ENCODE measurements at regions of chr6 and their contacts with region 1.

Region 1: GRCh38 chr6:26537846-26538571 is at the start of gene HMGN4:
- H3K4me3 ChIP-seq: peak within 1 kb of the TSS; percentile 76
- H3K27ac ChIP-seq: peak within 1 kb of the TSS; percentile 79
- H3K4me1 ChIP-seq: peaks cover 5% of the 10 kb centered on the region; the same call in 1 of the 2 replicates
- CTCF ChIP-seq: peak; percentile 65; the same call in 1 of the 2 replicates

Region 2: DNA sequence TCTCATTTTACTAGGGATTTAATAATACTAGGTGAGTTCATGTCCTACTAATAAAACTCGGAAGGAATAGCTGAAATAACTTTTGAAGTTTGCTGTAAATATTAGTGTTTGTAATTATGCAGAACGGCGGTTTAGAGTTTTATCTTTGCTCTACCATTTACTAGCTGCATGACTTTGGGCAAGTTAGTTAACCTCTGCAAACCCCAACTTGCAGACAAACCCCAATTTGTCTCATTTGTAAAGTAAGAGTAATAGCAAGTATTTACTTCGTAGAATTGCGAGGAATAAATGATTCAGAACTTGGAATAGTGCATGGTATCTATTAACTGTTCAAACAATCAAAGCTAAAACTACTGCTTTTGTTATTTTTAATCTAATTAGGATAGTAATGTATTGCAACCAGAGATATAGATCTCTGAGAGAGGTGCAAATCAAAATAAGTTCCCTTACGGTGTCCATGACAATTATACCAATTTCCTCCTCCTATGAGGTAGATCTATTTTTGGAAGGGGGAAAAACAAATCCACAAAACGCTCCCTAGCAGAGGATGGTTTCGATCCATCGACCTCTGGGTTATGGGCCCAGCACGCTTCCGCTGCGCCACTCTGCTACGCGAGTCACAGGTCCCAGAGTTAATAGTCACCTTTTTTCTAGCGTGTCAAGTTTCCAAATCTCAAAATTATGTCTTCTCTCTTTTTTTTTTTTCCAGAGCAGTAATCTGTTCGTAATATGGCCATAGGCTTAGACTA is 208.1 kb before region 1 on chr6:
- CTCF ChIA-PET with region 1: interaction called, 7 read pairs
- POLR2A ChIA-PET with region 1: interaction called, 11 read pairs
- H3K4me3 ChIP-seq: peak overlapping the region; percentile 73
- H3K27ac ChIP-seq: no peak overlapping the region
- H3K4me1 ChIP-seq: no peaks in the 10 kb centered on the region; the same call in 1 of the 2 replicates
- CTCF ChIP-seq: no peak

Region 3: DNA sequence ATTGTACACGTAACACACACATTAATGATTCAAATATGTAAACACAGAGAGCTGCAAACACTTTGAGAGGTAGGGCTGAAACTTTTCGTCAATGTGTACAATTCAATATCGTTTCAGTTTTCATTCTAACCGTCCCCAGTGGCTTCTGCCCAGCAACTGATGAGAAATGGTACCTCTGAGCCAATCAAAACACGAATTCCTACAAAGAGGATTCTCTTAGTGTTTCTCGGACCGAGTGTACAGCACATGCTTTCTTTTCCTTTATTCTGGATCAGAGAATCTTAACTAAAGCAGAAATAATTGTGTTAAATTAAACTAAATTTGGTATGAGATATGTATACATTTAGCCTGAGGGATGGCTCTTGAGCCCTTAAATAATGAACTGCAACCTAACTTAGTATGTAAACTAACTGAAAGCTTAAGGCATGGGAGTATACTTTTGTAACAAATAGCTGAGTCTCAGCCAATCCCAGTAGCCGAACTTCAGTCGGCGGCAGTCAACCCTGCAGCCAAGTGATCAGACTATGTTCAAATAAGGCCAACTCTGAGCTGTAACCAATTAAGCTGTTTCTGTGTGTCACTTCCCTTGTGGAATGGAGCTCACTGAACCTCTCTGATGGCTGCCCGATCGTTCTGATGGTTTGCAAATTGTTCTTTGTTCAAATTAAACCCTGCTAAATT is 64.1 kb before region 1 on chr6:
- CTCF ChIA-PET with region 1: no interaction called
- POLR2A ChIA-PET with region 1: interaction called, 14 read pairs
- H3K4me3 ChIP-seq: peak overlapping the region; percentile 45
- H3K27ac ChIP-seq: peak overlapping the region; percentile 76
- H3K4me1 ChIP-seq: peaks cover 8% of the 10 kb centered on the region
- CTCF ChIP-seq: no peak

Region 4: GRCh38 chr6:26520853-26521599 is 17.0 kb before region 1 on chr6:
- CTCF ChIA-PET with region 1: interaction called, 6 read pairs
- POLR2A ChIA-PET with region 1: interaction called, 13 read pairs
- H3K4me3 ChIP-seq: peak overlapping the region; percentile 62
- H3K27ac ChIP-seq: peak overlapping the region; percentile 98
- H3K4me1 ChIP-seq: 0 out of 2 replicates have a peak, but pooled peaks cover 2% of the 10 kb centered on the region
- CTCF ChIP-seq: no peak

Region 5: DNA sequence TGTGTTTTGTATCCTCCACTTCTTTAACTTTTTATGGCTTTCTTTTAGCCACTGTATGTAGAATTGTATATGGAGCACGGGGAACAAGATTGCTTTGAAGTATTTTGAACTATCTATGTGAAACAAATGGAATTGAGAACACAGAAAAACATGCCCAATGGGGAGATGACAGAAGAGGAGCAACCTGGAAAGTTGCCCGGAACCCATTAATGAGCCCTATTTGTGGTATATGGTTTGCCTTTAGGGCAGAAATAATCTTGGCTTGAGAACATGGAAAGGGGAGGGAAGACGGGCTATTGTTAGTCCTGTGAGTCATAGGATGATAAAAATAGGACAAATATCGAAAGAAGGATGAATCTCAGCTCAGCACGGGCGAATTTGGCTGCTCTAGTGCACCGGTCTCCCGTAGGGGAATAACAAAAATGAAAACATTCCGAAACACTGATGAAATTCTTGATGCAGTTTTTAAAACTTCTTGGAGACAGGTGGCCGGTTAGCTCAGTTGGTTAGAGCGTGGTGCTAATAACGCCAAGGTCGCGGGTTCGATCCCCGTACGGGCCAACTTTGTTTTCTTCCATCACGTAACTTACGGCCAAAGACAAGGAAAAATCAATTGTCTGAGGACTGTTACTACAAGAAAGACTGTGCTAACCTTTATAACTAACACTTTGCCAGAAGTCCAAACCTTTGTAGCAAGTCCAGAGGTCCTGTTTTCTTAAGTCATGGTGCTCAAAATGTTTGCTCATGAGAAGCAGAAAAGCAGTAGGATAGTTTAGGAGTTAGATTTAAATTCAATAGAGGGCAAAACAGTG is 15.8 kb after region 1 on chr6:
- CTCF ChIA-PET with region 1: interaction called, 5 read pairs
- POLR2A ChIA-PET with region 1: interaction called, 29 read pairs
- H3K4me3 ChIP-seq: peak overlapping the region; percentile 71
- H3K27ac ChIP-seq: peak overlapping the region; percentile 60
- H3K4me1 ChIP-seq: no peaks in the 10 kb centered on the region
- CTCF ChIP-seq: no peak

Region 6: GRCh38 chr6:26568601-26569432 is 30.8 kb after region 1 on chr6:
- CTCF ChIA-PET with region 1: interaction called, 9 read pairs
- POLR2A ChIA-PET with region 1: interaction called, 10 read pairs
- H3K4me3 ChIP-seq: peak overlapping the region; percentile 70
- H3K27ac ChIP-seq: peak overlapping the region; percentile 62
- H3K4me1 ChIP-seq: no peaks in the 10 kb centered on the region
- CTCF ChIP-seq: peak; percentile 70

Region 7: DNA sequence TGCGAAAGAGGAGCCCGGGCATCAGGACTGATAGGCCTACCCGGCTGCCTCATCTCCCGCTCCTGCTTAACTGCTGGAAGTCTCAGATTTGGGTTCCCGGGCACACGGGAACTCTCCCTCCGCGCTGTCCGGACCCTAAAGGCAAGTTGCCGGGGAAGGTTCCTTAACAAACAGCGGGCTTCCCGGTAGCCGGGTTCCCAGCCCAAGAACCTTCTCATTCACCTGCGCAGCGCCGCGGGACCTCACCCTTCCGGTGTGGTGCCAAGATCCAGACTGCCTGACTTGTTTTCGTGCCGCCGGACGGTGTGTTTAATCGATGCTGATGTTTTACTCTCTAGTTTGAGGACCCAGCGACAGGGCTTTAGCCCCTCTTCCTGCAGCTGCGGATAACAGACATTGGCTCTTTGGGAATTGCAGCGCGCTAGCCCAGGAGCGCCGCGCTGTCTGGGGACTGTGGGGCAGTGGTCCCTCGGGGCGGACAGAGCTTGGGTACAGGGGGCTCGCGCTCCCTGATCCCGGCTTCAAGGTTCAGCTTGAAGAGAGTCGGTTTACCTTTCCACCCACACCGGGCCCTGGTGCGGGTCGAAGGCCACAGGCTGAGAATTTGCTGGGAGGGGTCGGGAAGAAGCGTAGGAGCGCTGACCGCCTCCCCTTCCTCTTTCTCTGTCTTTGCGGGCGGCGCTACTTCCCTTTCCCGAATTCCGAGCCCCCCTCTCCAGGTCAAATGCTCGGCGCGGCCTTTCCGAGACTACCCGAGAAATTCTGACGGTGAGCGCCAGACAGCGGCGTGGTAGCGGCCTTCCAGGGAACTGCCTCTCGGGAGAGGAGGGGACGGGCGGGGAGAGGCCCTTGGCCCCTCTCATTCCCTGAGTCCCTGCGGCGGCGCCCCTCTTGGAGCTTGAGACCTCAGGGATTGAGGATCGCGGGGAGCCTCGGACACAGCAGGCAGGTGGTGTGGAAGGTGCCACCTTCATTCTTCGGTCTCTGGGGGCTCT is 76.0 kb after region 1 on chr6:
- CTCF ChIA-PET with region 1: no interaction called
- POLR2A ChIA-PET with region 1: no interaction called
- H3K4me3 ChIP-seq: no peak overlapping the region
- H3K27ac ChIP-seq: no peak overlapping the region
- H3K4me1 ChIP-seq: no peaks in the 10 kb centered on the region
- CTCF ChIP-seq: no peak